A549 (cell line): ENCODE measurements at regions of chr3 and their contacts with region 1.

Region 1: GRCh38 chr3:149536429-149536828 is 61.9 kb downstream of the TM4SF4 start:
- DNase-seq: peak in 1 of 2 experiments; percentile 55
- ATAC-seq: peak; percentile 8 to 11; a peak in 3 of 6 replicates
- H3K4me3 ChIP-seq: peak overlapping the region; percentile 25; the same call in 1 of the 3 replicates
- H3K27ac ChIP-seq: peak overlapping the region; percentile 82 to 84
- H3K4me1 ChIP-seq: peaks cover 100% of the 10 kb centered on the region
- CTCF ChIP-seq: no peak
- EP300 ChIP-seq: 0 out of 5 replicates have a peak, but pooled peaks of 1 of the 2 experiments have one; percentile 12
- POLR2A ChIP-seq: no peak
- RAD21 ChIP-seq: no peak

Region 2: GRCh38 chr3:149519912-149520311 is 16.5 kb before region 1 on chr3:
- CTCF ChIA-PET with region 1: interaction called, 24 read pairs
- POLR2A ChIA-PET with region 1: no interaction called
- DNase-seq: no peak
- ATAC-seq: no peak
- H3K4me3 ChIP-seq: no peak overlapping the region
- H3K27ac ChIP-seq: no peak overlapping the region
- H3K4me1 ChIP-seq: peaks cover 20% of the 10 kb centered on the region; the same call in 2 of the 3 replicates
- CTCF ChIP-seq: no peak
- EP300 ChIP-seq: no peak
- POLR2A ChIP-seq: no peak
- RAD21 ChIP-seq: no peak

Region 3: GRCh38 chr3:149566292-149566975 is 30.0 kb after region 1 on chr3:
- CTCF ChIA-PET with region 1: interaction called, 21 read pairs
- POLR2A ChIA-PET with region 1: interaction called, 3 read pairs
- DNase-seq: no peak
- ATAC-seq: peak in 1 of 2 experiments; percentile 28; a peak in 1 of 6 replicates
- H3K4me3 ChIP-seq: no peak overlapping the region
- H3K27ac ChIP-seq: peak overlapping the region; percentile 24 to 74
- H3K4me1 ChIP-seq: peaks cover 76% of the 10 kb centered on the region
- CTCF ChIP-seq: no peak
- EP300 ChIP-seq: no peak
- POLR2A ChIP-seq: no peak
- RAD21 ChIP-seq: no peak

Region 4: DNA sequence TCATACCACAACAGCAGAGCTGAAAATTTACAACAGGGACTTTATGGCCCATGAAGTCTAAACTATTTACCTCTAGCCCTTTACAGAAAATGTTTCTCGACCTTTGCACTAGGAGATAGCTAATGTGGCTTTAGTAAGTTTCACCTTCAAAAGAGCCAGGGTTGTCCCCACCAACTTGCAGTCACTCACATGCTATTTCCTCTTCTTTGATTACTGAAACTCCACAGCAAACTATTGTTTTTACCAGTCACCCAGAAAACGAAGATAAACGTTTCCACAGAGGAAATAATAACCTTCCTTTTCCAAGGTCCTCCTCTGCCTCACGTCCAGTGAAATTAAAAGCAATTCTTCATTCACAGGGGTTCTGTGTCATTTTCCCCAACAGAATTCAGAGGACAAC is 73.2 kb after region 1 on chr3:
- CTCF ChIA-PET with region 1: interaction called, 10 read pairs
- POLR2A ChIA-PET with region 1: no interaction called
- DNase-seq: no peak
- ATAC-seq: no peak
- H3K4me3 ChIP-seq: no peak overlapping the region
- H3K27ac ChIP-seq: peak overlapping the region; percentile 84 to 89
- H3K4me1 ChIP-seq: peaks cover 99% of the 10 kb centered on the region
- CTCF ChIP-seq: no peak
- EP300 ChIP-seq: no peak
- POLR2A ChIP-seq: no peak
- RAD21 ChIP-seq: no peak

Region 5: GRCh38 chr3:149646181-149646766 is 109.8 kb after region 1 on chr3:
- CTCF ChIA-PET with region 1: interaction called, 16 read pairs
- POLR2A ChIA-PET with region 1: no interaction called
- DNase-seq: peak in 1 of 2 experiments; percentile 41
- ATAC-seq: peak; percentile 47 to 49; a peak in 3 of 6 replicates
- H3K4me3 ChIP-seq: no peak overlapping the region
- H3K27ac ChIP-seq: no peak overlapping the region
- H3K4me1 ChIP-seq: peaks cover 58% of the 10 kb centered on the region
- CTCF ChIP-seq: no peak
- EP300 ChIP-seq: no peak
- POLR2A ChIP-seq: no peak
- RAD21 ChIP-seq: no peak

Region 6: GRCh38 chr3:149717391-149718056 is 181.1 kb after region 1 on chr3:
- CTCF ChIA-PET with region 1: interaction called, 25 read pairs
- POLR2A ChIA-PET with region 1: no interaction called
- DNase-seq: peak; percentile 31 to 83
- ATAC-seq: peak; percentile 85 to 87
- H3K4me3 ChIP-seq: no peak overlapping the region
- H3K27ac ChIP-seq: peak overlapping the region; percentile 58 to 64
- H3K4me1 ChIP-seq: peaks cover 6% of the 10 kb centered on the region
- CTCF ChIP-seq: peak; percentile 85
- EP300 ChIP-seq: no peak
- POLR2A ChIP-seq: no peak
- RAD21 ChIP-seq: peak; percentile 81 to 84

Region 7: DNA sequence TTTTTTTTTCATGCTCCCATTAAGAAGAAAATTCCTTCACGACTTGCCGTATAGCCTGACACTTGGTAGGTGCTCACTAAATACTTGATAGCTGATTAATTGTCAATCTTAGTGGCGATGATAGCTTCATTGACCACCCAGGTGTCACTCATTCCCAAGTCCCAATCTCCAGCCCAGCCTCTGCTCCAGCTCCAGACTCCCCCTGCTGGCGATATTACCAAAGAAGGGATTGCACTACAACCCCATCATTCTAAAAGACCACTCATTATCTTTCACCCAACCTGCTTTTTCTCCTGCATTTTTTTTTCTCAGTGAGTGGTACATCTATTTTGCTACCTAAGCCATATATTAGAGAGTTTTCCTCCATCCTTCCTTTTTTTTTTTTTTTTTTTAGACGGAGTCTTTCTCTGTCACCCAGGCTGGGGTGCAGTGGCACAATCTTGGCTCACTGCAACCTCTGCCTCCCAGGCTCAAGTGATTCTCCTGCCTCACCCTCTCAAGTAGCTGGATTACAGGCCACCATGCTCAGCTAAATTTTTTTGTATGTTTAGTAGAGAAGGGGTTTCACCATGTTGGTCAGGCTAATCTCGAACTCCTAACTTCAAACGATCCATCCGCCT is 235.3 kb after region 1 on chr3:
- CTCF ChIA-PET with region 1: interaction called, 13 read pairs
- POLR2A ChIA-PET with region 1: no interaction called
- DNase-seq: peak; percentile 43 to 67
- ATAC-seq: peak; percentile 85 to 96
- H3K4me3 ChIP-seq: no peak overlapping the region
- H3K27ac ChIP-seq: no peak overlapping the region
- H3K4me1 ChIP-seq: no peaks in the 10 kb centered on the region
- CTCF ChIP-seq: peak; percentile 73
- EP300 ChIP-seq: no peak
- POLR2A ChIP-seq: no peak
- RAD21 ChIP-seq: peak; percentile 63 to 82